ENCODE measurements at regions of chr3 and their contacts with region 1.

Region 1: GRCh38 chr3:45210308-45211041 is 15.6 kb downstream of the TMEM158 start:
- DNase-seq: peak; percentile 61 to 81 (median 77)
- ATAC-seq: peak; percentile 99
- H3K4me3 ChIP-seq: no peak overlapping the region
- H3K4me3 Mint-ChIP-seq: peak overlapping the region in 6 of 10 donors; percentile 23 to 66 (median 48)
- H3K27ac ChIP-seq: no peak overlapping the region
- H3K27ac Mint-ChIP-seq: peak overlapping the region in 3 of 9 donors; percentile 5 to 76 (median 31)
- H3K4me1 ChIP-seq: peaks cover 3 to 9% of the 10 kb centered on the region in 2 donors
- H3K4me1 Mint-ChIP-seq: peaks cover 11 to 26% (median 18%) of the 10 kb centered on the region in 7 donors
- H3K27me3 ChIP-seq: no peaks in the 10 kb centered on the region
- H3K27me3 Mint-ChIP-seq: peaks cover 11 to 32% (median 15%) of the 10 kb centered on the region in 5 donors

Region 2: GRCh38 chr3:45031531-45031930 is 178.9 kb before region 1 on chr3:
- CTCF ChIA-PET with region 1: interaction called, 379 read pairs
- POLR2A ChIA-PET with region 1: interaction called, 3 read pairs
- intact Hi-C with region 1: no loop called
- DNase-seq: no peak
- ATAC-seq: no peak
- H3K4me3 ChIP-seq: no peak overlapping the region
- H3K4me3 Mint-ChIP-seq: peak overlapping the region in 1 of 10 donors; percentile 6
- H3K27ac ChIP-seq: no peak overlapping the region
- H3K27ac Mint-ChIP-seq: no peak overlapping the region
- H3K4me1 ChIP-seq: peaks cover 9 to 13% of the 10 kb centered on the region in 2 donors
- H3K4me1 Mint-ChIP-seq: peaks cover 20 to 32% (median 28%) of the 10 kb centered on the region in 7 donors
- H3K27me3 ChIP-seq: no peaks in the 10 kb centered on the region
- H3K27me3 Mint-ChIP-seq: peaks cover 3 to 21% (median 6%) of the 10 kb centered on the region in 5 donors

Region 3: GRCh38 chr3:45055411-45056143 is 154.9 kb before region 1 on chr3:
- CTCF ChIA-PET with region 1: interaction called, 19 read pairs
- POLR2A ChIA-PET with region 1: no interaction called
- intact Hi-C with region 1: no loop called
- DNase-seq: peak in 1 of 9 donors; percentile 20
- ATAC-seq: peak; percentile 38
- H3K4me3 ChIP-seq: no peak overlapping the region
- H3K4me3 Mint-ChIP-seq: no peak overlapping the region
- H3K27ac ChIP-seq: no peak overlapping the region
- H3K27ac Mint-ChIP-seq: no peak overlapping the region
- H3K4me1 ChIP-seq: no peaks in the 10 kb centered on the region
- H3K4me1 Mint-ChIP-seq: peaks cover 0 to 30% (median 0%) of the 10 kb centered on the region in 7 donors
- H3K27me3 ChIP-seq: no peaks in the 10 kb centered on the region
- H3K27me3 Mint-ChIP-seq: peaks cover 0 to 9% (median 0%) of the 10 kb centered on the region in 5 donors

Region 4: DNA sequence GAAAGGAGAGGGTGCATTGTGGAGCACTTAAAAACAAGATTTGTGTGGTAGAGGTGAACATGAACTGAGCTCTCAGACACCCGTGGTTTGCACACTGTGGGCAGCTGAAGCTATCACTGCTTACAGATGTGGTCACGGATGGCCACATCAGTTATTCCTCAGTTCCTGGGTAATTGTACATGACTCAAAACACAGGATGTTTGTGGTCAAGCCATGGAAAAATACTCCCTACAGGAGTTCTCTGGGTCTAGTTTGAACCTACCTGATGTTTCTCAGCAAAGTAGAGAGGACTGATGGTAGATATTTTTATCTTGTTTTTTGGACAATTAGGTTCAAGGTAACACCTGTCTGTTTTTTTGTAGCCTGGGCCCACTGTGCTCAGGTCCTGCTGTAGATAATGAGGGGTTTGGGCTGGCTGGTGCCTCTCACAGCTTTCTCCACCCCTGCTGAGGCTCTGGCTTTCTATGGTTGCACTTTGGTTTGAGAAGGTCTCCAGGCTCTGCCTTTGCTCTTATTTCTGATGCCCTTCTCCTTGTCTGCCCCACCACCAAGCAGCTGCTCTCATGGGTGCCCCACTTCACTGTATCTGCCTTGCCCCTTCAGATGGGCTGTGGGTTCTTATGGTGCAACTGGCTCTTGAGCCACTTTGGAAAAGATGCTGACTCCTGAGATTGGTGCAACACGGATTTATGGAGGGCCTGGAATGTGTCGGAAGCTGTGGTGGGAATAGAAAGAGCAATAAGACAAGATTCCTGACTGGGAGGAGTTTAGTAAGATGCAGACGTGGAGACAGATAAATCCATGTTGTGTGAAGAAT is 104.4 kb before region 1 on chr3:
- CTCF ChIA-PET with region 1: interaction called, 4 read pairs
- POLR2A ChIA-PET with region 1: no interaction called
- intact Hi-C with region 1: loop called in 1 of 2 experiments (anchors 1 kb)
- DNase-seq: peak in 8 of 9 donors; percentile 42 to 85 (median 66)
- ATAC-seq: peak; percentile 79
- H3K4me3 ChIP-seq: no peak overlapping the region
- H3K4me3 Mint-ChIP-seq: peak overlapping the region; percentile 21 to 75 (median 56)
- H3K27ac ChIP-seq: no peak overlapping the region
- H3K27ac Mint-ChIP-seq: peak overlapping the region; percentile 30 to 88 (median 60)
- H3K4me1 ChIP-seq: peaks cover 50 to 66% of the 10 kb centered on the region in 2 donors
- H3K4me1 Mint-ChIP-seq: peaks cover 33 to 83% (median 74%) of the 10 kb centered on the region in 7 donors
- H3K27me3 ChIP-seq: no peaks in the 10 kb centered on the region
- H3K27me3 Mint-ChIP-seq: peaks cover 7 to 32% (median 9%) of the 10 kb centered on the region in 5 donors

Region 5: DNA sequence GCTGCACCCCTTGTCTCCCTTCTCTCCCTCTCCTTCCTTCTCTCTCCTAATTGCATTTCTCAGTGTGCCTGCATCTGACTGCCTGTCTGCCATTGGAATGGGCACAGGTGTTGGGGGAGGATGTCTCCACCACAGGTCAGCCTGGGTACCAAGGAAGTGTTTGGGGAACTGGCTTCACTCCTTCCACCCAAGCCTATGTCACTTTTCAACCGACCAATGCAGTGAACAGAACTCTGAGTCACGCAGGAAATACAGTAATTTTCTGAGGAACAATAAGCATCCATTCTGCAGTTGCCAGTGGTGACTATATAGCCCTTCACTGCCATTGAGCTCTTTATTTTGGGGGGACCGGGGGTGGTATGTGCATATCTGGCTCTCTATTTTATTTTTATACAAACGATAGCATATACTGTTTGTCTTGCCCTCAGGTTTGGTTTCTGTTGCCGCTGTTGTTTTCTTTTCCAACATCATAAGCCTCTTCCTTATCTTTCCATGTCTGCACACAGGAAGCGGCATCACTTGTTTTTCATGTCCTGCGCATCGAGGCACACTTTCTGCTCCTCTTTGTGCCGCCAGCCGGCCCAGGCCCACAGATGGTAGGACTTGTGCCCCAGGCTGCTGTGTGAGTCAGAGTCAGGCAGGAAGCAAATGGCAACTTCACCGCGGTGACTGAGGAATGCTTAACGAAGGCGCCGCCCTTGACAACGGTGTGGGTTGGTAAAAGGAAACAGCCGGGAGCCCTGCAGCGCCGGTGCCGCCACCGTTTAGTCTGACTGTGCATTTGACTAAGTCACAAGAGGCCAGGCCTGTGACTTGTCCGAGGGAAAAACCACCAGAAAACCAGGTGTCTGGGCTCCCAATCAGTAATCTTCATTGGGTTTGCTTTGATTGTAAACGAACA is 43.2 kb before region 1 on chr3:
- CTCF ChIA-PET with region 1: interaction called, 8 read pairs
- POLR2A ChIA-PET with region 1: no interaction called
- intact Hi-C with region 1: loop called in 1 of 2 experiments (anchors 1 kb)
- DNase-seq: peak; percentile 56 to 79 (median 74)
- ATAC-seq: peak; percentile 95
- H3K4me3 ChIP-seq: peak overlapping the region; percentile 33
- H3K4me3 Mint-ChIP-seq: peak overlapping the region; percentile 65 to 87 (median 78)
- H3K27ac ChIP-seq: peak overlapping the region; percentile 30
- H3K27ac Mint-ChIP-seq: peak overlapping the region; percentile 82 to 95 (median 90)
- H3K4me1 ChIP-seq: peaks cover 9 to 19% of the 10 kb centered on the region in 2 donors
- H3K4me1 Mint-ChIP-seq: peaks cover 16 to 56% (median 40%) of the 10 kb centered on the region in 7 donors
- H3K27me3 ChIP-seq: no peaks in the 10 kb centered on the region
- H3K27me3 Mint-ChIP-seq: peaks cover 0 to 3% (median 0%) of the 10 kb centered on the region in 5 donors

Region 6: GRCh38 chr3:45656575-45657363 is 446.3 kb after region 1 on chr3:
- CTCF ChIA-PET with region 1: interaction called, 7 read pairs
- POLR2A ChIA-PET with region 1: no interaction called
- intact Hi-C with region 1: loop called (anchors 2 to 5 kb)
- DNase-seq: peak; percentile 65 to 83 (median 78)
- ATAC-seq: peak; percentile 94
- H3K4me3 ChIP-seq: no peak overlapping the region
- H3K4me3 Mint-ChIP-seq: no peak overlapping the region
- H3K27ac ChIP-seq: no peak overlapping the region
- H3K27ac Mint-ChIP-seq: peak overlapping the region in 1 of 9 donors; percentile 30
- H3K4me1 ChIP-seq: no peaks in the 10 kb centered on the region
- H3K4me1 Mint-ChIP-seq: peaks cover 6 to 27% (median 18%) of the 10 kb centered on the region in 7 donors
- H3K27me3 ChIP-seq: no peaks in the 10 kb centered on the region
- H3K27me3 Mint-ChIP-seq: no peaks in the 10 kb centered on the region

Region 7: DNA sequence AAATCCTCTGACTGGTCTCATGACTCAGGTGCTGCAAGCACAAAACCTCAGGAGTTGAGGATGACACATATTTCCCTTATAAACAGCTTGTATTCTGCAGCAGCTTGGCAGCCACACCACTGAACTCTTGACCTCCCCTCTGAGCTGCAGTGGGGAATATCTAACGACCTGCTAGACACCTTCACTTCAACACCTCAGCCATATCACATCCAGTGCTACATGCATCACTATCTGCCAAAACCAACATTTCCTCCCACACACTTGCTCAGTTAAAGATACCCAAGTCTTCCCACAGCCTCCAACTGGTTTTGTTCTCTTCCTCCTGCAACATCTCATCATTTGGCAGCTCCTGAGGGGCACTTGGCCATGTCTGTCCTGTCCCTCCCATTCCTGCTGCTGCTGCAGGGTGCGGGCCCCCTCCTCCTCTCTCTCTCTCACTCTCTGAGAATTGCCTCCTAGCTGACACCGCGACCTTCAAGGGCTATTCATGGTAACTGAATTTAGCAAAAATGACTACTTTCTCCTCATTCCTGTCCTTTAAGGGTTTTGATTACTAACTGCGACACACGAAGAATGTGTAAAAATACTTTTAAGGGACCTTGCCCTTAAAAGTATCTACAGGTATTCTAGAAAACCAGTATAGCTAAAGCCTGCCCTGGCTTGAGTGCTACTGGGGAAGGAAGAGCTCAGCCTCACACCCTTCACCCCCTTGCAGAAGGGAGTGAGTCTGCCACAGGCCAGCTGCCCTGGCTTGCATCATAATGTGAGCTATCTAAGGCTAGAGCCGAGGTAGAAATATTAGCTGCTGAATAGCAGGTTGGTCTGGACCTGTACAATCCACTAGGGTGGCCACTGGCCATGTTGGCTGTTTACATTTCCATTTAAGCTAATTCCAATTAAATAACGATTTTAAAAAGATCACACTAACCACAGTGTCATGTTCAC is 670.9 kb after region 1 on chr3:
- CTCF ChIA-PET with region 1: no interaction called
- POLR2A ChIA-PET with region 1: no interaction called
- intact Hi-C with region 1: no loop called
- DNase-seq: no peak
- ATAC-seq: peak; percentile 83
- H3K4me3 ChIP-seq: no peak overlapping the region
- H3K4me3 Mint-ChIP-seq: peak overlapping the region in 3 of 10 donors; percentile 4 to 9 (median 6)
- H3K27ac ChIP-seq: no peak overlapping the region
- H3K27ac Mint-ChIP-seq: peak overlapping the region in 2 of 9 donors; percentile 17 to 24
- H3K4me1 ChIP-seq: peaks cover 16 to 17% of the 10 kb centered on the region in 2 donors
- H3K4me1 Mint-ChIP-seq: peaks cover 13 to 25% (median 23%) of the 10 kb centered on the region in 7 donors
- H3K27me3 ChIP-seq: no peaks in the 10 kb centered on the region
- H3K27me3 Mint-ChIP-seq: peaks cover 0 to 49% (median 0%) of the 10 kb centered on the region in 5 donors

Region 8: GRCh38 chr3:46692566-46692990 is 1482.1 kb after region 1 on chr3:
- CTCF ChIA-PET with region 1: no interaction called
- POLR2A ChIA-PET with region 1: no interaction called
- intact Hi-C with region 1: no loop called
- DNase-seq: no peak
- ATAC-seq: no peak
- H3K4me3 ChIP-seq: peak overlapping the region; percentile 81
- H3K4me3 Mint-ChIP-seq: peak overlapping the region; percentile 85 to 96 (median 94)
- H3K27ac ChIP-seq: peak overlapping the region; percentile 79
- H3K27ac Mint-ChIP-seq: peak overlapping the region; percentile 42 to 96 (median 90)
- H3K4me1 ChIP-seq: peaks cover 32 to 72% of the 10 kb centered on the region in 2 donors
- H3K4me1 Mint-ChIP-seq: peaks cover 32 to 79% (median 63%) of the 10 kb centered on the region in 7 donors
- H3K27me3 ChIP-seq: no peaks in the 10 kb centered on the region
- H3K27me3 Mint-ChIP-seq: peaks cover 0 to 27% (median 0%) of the 10 kb centered on the region in 5 donors